ENCODE measurements at regions of chr17 and their contacts with region 1.

Region 1: DNA sequence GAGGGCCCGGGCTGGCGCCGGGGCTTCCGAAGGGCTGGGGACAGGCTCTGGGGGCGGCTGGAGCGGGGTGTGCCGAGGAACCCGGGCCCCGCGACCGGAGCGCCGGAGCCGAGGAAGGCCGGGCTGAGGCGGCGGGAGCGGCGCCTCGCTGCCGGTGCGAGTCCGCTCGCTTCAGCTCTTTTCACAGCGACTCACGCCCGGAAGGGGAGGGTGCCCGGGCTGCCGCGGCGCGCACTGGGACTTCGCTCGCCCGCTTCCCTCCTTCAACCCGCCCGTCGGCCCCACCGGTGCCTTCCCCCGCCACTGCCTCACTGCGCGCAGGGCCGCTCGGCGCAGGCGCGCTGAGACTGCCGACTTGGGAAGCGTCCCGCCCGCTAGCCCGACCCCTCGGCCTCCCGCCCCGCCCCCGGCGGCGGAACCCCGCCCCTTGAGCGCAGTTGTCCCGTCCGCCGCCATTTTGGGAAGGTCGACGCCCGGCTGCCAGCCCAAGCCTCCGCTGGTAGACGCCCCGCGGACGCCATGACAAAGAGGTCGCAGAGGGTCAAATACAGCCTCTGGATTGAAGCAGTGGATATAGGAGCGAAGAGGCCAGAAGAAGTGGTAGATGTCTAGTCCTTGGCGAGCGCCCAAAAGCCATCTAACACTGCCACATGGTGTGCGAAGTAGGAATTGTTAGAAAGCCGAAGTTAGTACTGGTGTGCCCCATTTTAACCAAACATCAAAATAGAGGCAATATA is at the start of gene UBE2G1:
- DNase-seq: peak; percentile 97 to 100 (median 99)
- ATAC-seq: peak; percentile 82
- H3K4me3 ChIP-seq: peak within 1 kb of the TSS; percentile 54
- H3K4me3 Mint-ChIP-seq: peak within 1 kb of the TSS; percentile 90
- H3K27ac ChIP-seq: peak within 1 kb of the TSS; percentile 68 to 91
- H3K27ac Mint-ChIP-seq: peak within 1 kb of the TSS; percentile 89
- H3K4me1 ChIP-seq: peaks cover 41% of the 10 kb centered on the region
- H3K4me1 Mint-ChIP-seq: peaks cover 31% of the 10 kb centered on the region
- H3K27me3 ChIP-seq: no peaks in the 10 kb centered on the region
- H3K27me3 Mint-ChIP-seq: no peaks in the 10 kb centered on the region
- CTCF ChIP-seq: no peak
- total RNA-seq, gene UBE2G1: 58.5 to 58.8 TPM

Region 2: DNA sequence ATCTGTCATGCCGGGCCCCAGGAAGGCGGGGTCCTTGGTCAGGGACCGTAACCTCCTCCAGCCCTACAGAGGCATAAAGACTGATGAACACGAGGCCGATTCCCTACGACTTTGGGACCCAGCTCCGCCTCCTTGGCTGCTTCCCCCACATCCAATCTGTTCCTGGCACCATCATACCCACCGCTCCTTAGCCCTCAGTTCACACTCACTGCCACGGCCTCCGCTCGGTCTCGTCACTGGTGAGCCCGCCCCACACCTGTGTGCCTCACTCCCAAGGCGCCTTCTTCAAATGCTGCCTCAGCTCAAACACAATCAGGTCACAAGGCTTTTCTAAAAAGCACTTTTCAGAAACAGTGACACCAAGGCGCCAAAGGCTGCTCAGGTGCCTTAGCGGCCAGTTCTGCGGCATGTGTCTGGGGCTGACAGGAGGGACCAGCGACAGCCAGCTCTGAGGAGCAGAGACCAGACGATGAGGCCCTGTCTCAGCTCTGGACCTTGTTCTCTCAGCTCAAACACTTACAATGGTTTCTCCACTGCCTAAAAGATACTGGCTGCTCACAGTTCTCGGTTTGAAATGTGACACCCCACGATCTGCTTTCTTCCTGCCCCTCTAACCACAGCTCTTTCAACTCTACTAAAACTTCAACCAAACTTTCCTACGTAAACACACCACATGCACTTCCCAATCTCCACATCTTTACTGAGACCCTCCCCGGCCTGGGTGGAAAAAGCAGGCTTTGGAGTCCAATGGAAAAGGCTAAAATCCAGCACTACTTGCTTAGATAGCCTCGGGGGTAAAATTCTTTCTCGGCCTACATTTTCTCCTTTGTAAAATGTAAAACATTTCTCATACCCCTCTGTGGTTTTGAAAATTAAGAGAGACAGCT is 190.3 kb before region 1 on chr17:
- CTCF ChIA-PET with region 1: no interaction called
- POLR2A ChIA-PET with region 1: interaction called, 10 read pairs
- intact Hi-C with region 1: no loop called
- DNase-seq: peak in 13 of 14 experiments; percentile 12 to 71 (median 38)
- ATAC-seq: peak; percentile 78
- H3K4me3 ChIP-seq: peak overlapping the region; percentile 16
- H3K4me3 Mint-ChIP-seq: peak overlapping the region; percentile 66
- H3K27ac ChIP-seq: peak overlapping the region; percentile 70 to 85
- H3K27ac Mint-ChIP-seq: peak overlapping the region; percentile 90
- H3K4me1 ChIP-seq: peaks cover 57% of the 10 kb centered on the region
- H3K4me1 Mint-ChIP-seq: peaks cover 61% of the 10 kb centered on the region
- H3K27me3 ChIP-seq: no peaks in the 10 kb centered on the region
- H3K27me3 Mint-ChIP-seq: no peaks in the 10 kb centered on the region
- CTCF ChIP-seq: no peak

Region 3: GRCh38 chr17:4263282-4264215 is 102.9 kb before region 1 on chr17 and contains the start of gene ANKFY1:
- CTCF ChIA-PET with region 1: no interaction called
- POLR2A ChIA-PET with region 1: interaction called, 14 read pairs
- intact Hi-C with region 1: loop called (anchors 2 to 5 kb)
- DNase-seq: peak; percentile 95 to 98 (median 97)
- ATAC-seq: peak; percentile 97
- H3K4me3 ChIP-seq: peak within 1 kb of the TSS; percentile 75
- H3K4me3 Mint-ChIP-seq: peak within 1 kb of the TSS; percentile 95
- H3K27ac ChIP-seq: peak within 1 kb of the TSS; percentile 60 to 64
- H3K27ac Mint-ChIP-seq: peak within 1 kb of the TSS; percentile 75
- H3K4me1 ChIP-seq: peaks cover 32% of the 10 kb centered on the region
- H3K4me1 Mint-ChIP-seq: peaks cover 36% of the 10 kb centered on the region
- H3K27me3 ChIP-seq: no peaks in the 10 kb centered on the region
- H3K27me3 Mint-ChIP-seq: no peaks in the 10 kb centered on the region
- CTCF ChIP-seq: no peak
- total RNA-seq, gene ANKFY1: 31.8 to 39.1 TPM

Region 4: GRCh38 chr17:4304417-4305027 is 62.0 kb before region 1 on chr17:
- CTCF ChIA-PET with region 1: no interaction called
- POLR2A ChIA-PET with region 1: interaction called, 7 read pairs
- intact Hi-C with region 1: loop called (anchors 5 kb)
- DNase-seq: peak in 13 of 14 experiments; percentile 8 to 82 (median 46)
- ATAC-seq: peak; percentile 93
- H3K4me3 ChIP-seq: no peak overlapping the region
- H3K4me3 Mint-ChIP-seq: no peak overlapping the region
- H3K27ac ChIP-seq: no peak overlapping the region
- H3K27ac Mint-ChIP-seq: peak overlapping the region; percentile 45
- H3K4me1 ChIP-seq: peaks cover 7% of the 10 kb centered on the region
- H3K4me1 Mint-ChIP-seq: peaks cover 34% of the 10 kb centered on the region
- H3K27me3 ChIP-seq: no peaks in the 10 kb centered on the region
- H3K27me3 Mint-ChIP-seq: no peaks in the 10 kb centered on the region
- CTCF ChIP-seq: peak; percentile 95

Region 5: GRCh38 chr17:4329838-4330237 is 36.7 kb before region 1 on chr17:
- CTCF ChIA-PET with region 1: no interaction called
- POLR2A ChIA-PET with region 1: interaction called, 4 read pairs
- intact Hi-C with region 1: loop called in 1 of 2 experiments (anchors 5 kb)
- DNase-seq: no peak
- ATAC-seq: no peak
- H3K4me3 ChIP-seq: no peak overlapping the region
- H3K4me3 Mint-ChIP-seq: no peak overlapping the region
- H3K27ac ChIP-seq: no peak overlapping the region
- H3K27ac Mint-ChIP-seq: no peak overlapping the region
- H3K4me1 ChIP-seq: peaks cover 17% of the 10 kb centered on the region
- H3K4me1 Mint-ChIP-seq: peaks cover 67% of the 10 kb centered on the region
- H3K27me3 ChIP-seq: no peaks in the 10 kb centered on the region
- H3K27me3 Mint-ChIP-seq: no peaks in the 10 kb centered on the region
- CTCF ChIP-seq: no peak